ENCODE measurements at regions of chr9 and their contacts with region 1.

Region 1: GRCh38 chr9:136849038-136849959 is at the start of gene PHPT1:
- DNase-seq: peak; percentile 99
- ATAC-seq: peak; percentile 96
- total RNA-seq, gene PHPT1: 76.4 TPM

Region 2: GRCh38 chr9:136790927-136791641 is 58.2 kb before region 1 on chr9 and contains the start of gene TMEM141:
- intact Hi-C with region 1: no loop called
- DNase-seq: peak; percentile 100
- ATAC-seq: peak; percentile 97
- total RNA-seq, gene TMEM141: 37.8 TPM

Region 3: GRCh38 chr9:137000177-137000883 is 151.0 kb after region 1 on chr9:
- intact Hi-C with region 1: no loop called
- DNase-seq: no peak
- ATAC-seq: no peak

Region 4: GRCh38 chr9:137029058-137029936 is 180.0 kb after region 1 on chr9:
- intact Hi-C with region 1: loop called (anchors 10 kb)
- DNase-seq: peak; percentile 89
- ATAC-seq: peak; percentile 65